ENCODE measurements at regions of chr17 and their contacts with region 1.

Region 1: DNA sequence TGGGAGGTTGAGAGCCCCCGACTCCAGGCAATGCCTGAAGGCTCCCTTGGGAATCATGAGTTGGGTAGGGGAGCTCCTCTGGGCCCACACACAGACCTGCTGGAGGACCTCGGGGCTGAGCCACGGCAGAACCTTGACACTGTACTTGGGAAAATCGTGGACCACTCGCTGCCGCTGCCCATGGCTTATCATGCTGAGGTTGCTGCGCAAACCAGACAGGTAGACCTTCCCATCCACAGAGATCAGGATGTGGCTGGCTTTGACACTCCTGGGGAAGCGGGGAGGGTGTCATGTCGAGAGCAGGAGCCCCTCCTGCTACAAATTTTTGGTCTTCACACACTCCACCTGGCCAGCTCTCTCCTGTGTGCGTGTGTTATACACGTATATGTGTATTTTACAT is 7.2 kb upstream of the LIMD2 start:
- DNase-seq: peak in 6 of 9 donors; percentile 45 to 61 (median 50)
- ATAC-seq: peak; percentile 52
- H3K4me3 ChIP-seq: peak overlapping the region; percentile 43
- H3K4me3 Mint-ChIP-seq: peak overlapping the region; percentile 59 to 97 (median 77)
- H3K27ac ChIP-seq: peak overlapping the region; percentile 71
- H3K27ac Mint-ChIP-seq: peak overlapping the region; percentile 83 to 98 (median 90)
- H3K4me1 ChIP-seq: peaks cover 62 to 72% of the 10 kb centered on the region in 2 donors
- H3K4me1 Mint-ChIP-seq: peaks cover 56 to 85% (median 76%) of the 10 kb centered on the region in 7 donors
- H3K27me3 ChIP-seq: no peaks in the 10 kb centered on the region
- H3K27me3 Mint-ChIP-seq: no peaks in the 10 kb centered on the region

Region 2: GRCh38 chr17:63675607-63676413 is 31.3 kb before region 1 on chr17:
- CTCF ChIA-PET with region 1: interaction called, 8 read pairs
- POLR2A ChIA-PET with region 1: interaction called, 28 read pairs
- intact Hi-C with region 1: no loop called
- DNase-seq: no peak
- ATAC-seq: no peak
- H3K4me3 ChIP-seq: no peak overlapping the region
- H3K4me3 Mint-ChIP-seq: no peak overlapping the region
- H3K27ac ChIP-seq: peak overlapping the region; percentile 1
- H3K27ac Mint-ChIP-seq: peak overlapping the region in 7 of 9 donors; percentile 26 to 87 (median 56)
- H3K4me1 ChIP-seq: no peaks in the 10 kb centered on the region
- H3K4me1 Mint-ChIP-seq: peaks cover 3 to 42% (median 30%) of the 10 kb centered on the region in 7 donors
- H3K27me3 ChIP-seq: no peaks in the 10 kb centered on the region
- H3K27me3 Mint-ChIP-seq: no peaks in the 10 kb centered on the region

Region 3: GRCh38 chr17:63722403-63722802 is 15.3 kb after region 1 on chr17:
- CTCF ChIA-PET with region 1: interaction called, 4 read pairs
- POLR2A ChIA-PET with region 1: interaction called, 47 read pairs
- intact Hi-C with region 1: no loop called
- DNase-seq: no peak
- ATAC-seq: no peak
- H3K4me3 ChIP-seq: no peak overlapping the region
- H3K4me3 Mint-ChIP-seq: no peak overlapping the region
- H3K27ac ChIP-seq: no peak overlapping the region
- H3K27ac Mint-ChIP-seq: no peak overlapping the region
- H3K4me1 ChIP-seq: no peaks in the 10 kb centered on the region
- H3K4me1 Mint-ChIP-seq: peaks cover 0 to 7% (median 2%) of the 10 kb centered on the region in 7 donors
- H3K27me3 ChIP-seq: no peaks in the 10 kb centered on the region
- H3K27me3 Mint-ChIP-seq: no peaks in the 10 kb centered on the region

Measured in naive thymus-derived CD4-positive, alpha-beta T cell (primary cell).